ENCODE measurements at regions of chr15 and their contacts with region 1.

Region 1: DNA sequence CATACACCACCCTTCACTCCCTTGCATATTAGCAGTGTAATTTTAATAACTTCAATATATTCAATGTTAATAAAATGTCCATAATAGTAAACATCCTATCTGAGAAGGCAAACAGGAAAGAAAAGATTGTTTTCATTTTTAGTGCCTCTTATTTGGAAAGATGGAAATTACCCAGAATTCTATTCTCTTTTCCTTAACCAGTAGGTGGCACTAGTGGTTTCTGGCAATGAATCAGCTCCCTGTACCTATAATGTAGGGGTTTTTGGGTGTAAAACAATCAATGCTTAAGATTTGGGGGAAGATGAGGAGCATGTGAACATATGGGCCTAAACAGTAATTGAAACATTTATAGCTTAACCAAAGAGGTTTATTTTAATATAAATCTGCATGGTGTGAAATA is 5.7 kb upstream of the SEMA6D start:
- DNase-seq: no peak
- H3K4me3 ChIP-seq: no peak overlapping the region
- CTCF ChIP-seq: peak; percentile 45

Region 2: DNA sequence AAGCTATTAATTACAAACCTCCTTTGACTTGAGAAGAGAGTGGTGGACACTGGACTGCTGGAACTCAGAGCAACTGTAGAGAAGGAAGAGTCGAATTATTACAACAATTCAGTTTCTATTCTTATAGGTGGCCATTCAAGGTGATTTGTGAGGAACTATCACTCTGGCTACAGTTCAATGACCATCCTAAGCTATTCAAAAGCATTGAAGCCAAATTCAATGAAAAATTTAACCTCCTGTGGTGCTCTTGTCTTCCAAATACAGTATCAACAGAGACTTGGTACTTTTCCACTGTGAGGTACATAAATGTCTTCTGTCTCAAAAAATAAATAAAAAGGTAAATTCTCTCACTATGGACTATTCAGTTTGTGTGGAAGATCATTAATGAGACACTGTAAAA is 507.7 kb before region 1 on chr15:
- in situ Hi-C with region 1: loop called (anchors 5 kb)
- DNase-seq: no peak
- H3K4me3 ChIP-seq: no peak overlapping the region
- CTCF ChIP-seq: no peak

Region 3: GRCh38 chr15:47663101-47663500 is 48.6 kb before region 1 on chr15:
- in situ Hi-C with region 1: loop called (anchors 5 kb)
- DNase-seq: no peak
- H3K4me3 ChIP-seq: no peak overlapping the region
- CTCF ChIP-seq: no peak